Cardiac septum (tissue), 1 donor: ENCODE measurements at regions of chr10 and their contacts with region 1.

Region 1: GRCh38 chr10:62816331-62817120 is at the start of gene EGR2:
- DNase-seq: peak; percentile 98
- total RNA-seq, gene EGR2: 4.8 TPM

Region 2: DNA sequence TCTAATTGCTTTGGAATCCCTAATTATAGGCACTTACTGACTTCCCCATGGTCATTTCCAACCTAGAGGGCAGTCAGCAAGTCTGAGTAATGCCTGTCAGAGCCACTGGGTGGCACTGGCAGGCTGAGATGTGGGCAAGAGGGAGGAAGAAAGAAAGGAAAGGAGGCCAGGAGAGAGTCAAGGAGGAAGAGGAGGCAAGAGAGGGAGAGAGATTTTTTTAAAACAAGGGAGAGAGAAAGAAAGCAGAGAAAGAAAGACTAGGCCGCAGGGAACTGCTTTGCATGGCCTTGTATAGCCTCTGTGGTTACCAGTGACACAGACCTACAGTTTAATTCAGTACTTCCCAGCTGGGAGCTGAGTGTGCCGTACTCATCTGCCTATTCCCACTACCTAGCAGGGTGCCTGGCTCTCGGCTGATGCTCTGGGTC is 222.4 kb before region 1 on chr10:
- intact Hi-C with region 1: loop called (anchors 5 kb)
- DNase-seq: peak; percentile 84

Region 3: DNA sequence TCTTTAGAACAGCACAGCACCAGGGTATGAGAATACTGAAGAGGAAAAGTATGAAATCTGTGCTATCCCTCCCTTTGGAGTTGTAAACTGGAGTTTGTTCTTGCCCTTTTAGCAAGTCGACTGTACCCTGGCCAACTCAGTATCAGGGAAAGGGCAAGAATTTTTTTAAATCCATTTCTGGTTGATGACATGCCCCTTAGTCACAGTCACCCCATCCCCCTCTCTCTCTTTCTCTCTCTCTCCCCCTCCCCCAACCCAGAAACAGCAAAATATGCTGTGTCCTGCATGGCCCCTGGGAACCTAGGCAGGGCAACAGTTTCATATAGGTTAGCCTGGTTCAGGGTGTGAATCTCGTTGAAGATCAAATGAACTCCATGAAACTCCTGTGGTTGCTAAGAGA is 189.7 kb before region 1 on chr10:
- intact Hi-C with region 1: no loop called
- DNase-seq: no peak

Region 4: DNA sequence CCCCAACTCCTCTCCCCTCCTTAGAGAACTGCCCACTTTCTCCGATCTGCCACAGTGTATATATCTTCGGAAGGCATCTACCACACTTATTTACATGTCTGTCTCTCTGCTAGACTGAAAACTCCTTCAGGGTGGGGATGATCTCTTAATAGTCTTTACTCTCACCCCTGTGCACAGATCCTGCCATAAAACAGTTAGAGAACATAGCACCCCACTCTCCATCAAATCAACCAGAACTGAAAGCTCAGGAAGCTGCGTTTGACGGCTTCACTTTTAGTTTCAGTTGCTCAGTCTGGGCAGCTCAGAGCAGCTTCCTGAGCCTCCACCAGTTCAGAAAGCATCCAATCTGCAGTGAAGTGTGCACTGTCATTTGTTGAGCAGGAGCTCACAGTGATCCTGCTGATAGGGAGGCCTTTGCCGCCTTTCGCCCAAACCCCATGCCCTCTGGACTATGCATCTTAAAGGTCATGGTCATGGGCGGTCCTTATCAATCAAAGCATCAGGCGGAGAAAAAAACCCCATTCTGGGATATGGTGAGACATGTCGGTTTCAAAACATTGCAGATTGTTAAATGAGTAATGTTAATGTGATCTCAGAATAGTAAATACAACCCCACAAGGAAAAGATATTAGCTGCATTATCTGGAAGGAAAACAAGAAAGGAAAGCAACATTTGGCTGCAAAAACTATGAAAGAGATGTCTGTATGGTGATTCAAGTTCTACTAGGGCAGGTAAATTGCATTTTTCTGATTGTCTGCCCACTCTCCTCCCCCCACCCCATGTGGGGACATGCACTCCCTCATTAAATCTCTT is 179.1 kb before region 1 on chr10:
- intact Hi-C with region 1: loop called (anchors 5 kb)
- DNase-seq: no peak

Region 5: GRCh38 chr10:63083904-63084689 is 267.6 kb after region 1 on chr10:
- intact Hi-C with region 1: loop called (anchors 5 kb)
- DNase-seq: no peak